ENCODE measurements at regions of chr11 and their contacts with region 1.

Region 1: DNA sequence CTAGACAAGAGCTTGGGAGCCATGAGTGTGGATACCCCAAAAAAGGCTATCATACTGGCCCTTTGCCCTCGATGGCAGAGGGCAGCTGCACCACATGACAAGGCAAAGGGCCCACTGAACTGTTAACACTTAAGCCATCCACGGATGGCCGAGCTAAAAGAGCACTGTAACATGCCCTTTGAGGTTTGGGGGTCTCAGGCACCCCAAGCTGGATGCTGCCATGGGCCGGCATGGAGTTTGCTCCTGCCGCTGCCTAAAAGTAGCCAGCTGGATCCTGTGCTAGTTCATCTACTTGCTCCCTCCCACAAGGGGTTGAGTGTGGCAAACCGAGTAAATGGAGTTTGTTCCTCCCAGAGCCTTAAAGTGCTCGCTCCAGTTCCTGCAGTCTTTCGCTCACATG is 383.2 kb upstream of the LRRC4C start:
- DNase-seq: no peak
- H3K4me3 ChIP-seq: no peak overlapping the region
- H3K27ac ChIP-seq: no peak overlapping the region
- H3K4me1 ChIP-seq: no peaks in the 10 kb centered on the region
- H3K27me3 ChIP-seq: no peaks in the 10 kb centered on the region
- CTCF ChIP-seq: no peak
- POLR2A ChIP-seq: no peak

Region 2: GRCh38 chr11:41803895-41804294 is 38.8 kb before region 1 on chr11:
- intact Hi-C with region 1: no loop called
- DNase-seq: no peak
- H3K4me3 ChIP-seq: no peak overlapping the region
- H3K27ac ChIP-seq: no peak overlapping the region
- H3K4me1 ChIP-seq: no peaks in the 10 kb centered on the region
- H3K27me3 ChIP-seq: no peaks in the 10 kb centered on the region
- CTCF ChIP-seq: no peak
- POLR2A ChIP-seq: no peak

Region 3: GRCh38 chr11:42390116-42390515 is 547.4 kb after region 1 on chr11:
- intact Hi-C with region 1: loop called (anchors 5 kb)
- DNase-seq: no peak
- H3K4me3 ChIP-seq: no peak overlapping the region
- H3K27ac ChIP-seq: no peak overlapping the region
- H3K4me1 ChIP-seq: no peaks in the 10 kb centered on the region
- H3K27me3 ChIP-seq: no peaks in the 10 kb centered on the region
- CTCF ChIP-seq: no peak
- POLR2A ChIP-seq: no peak

Measured in breast epithelium (tissue), 4 donors.